ENCODE measurements at regions of chr21 and their contacts with region 1.

Region 1: DNA sequence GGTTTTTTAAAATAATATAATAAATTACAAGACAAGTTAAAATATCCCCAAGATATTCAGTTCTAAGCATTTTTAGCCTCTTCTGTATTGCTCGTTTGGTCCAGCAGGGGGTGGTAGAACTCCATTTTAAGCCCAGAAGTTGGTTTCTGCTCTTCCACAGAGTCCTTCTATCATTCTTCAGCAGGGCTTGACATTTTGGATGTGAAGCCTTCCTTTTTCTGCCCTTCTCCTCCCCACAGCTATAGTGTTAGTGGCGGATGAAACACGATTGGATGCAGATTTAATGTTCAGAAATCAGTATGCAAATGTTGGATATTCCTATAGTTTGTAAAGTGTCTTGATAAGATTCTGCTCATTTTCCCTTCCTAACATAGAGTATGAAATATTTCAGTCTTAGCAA is 1.4 kb downstream of the NCAM2 start:
- DNase-seq: no peak
- H3K4me3 Mint-ChIP-seq: no peak overlapping the region
- H3K27ac Mint-ChIP-seq: no peak overlapping the region
- H3K4me1 Mint-ChIP-seq: peaks cover 6% of the 10 kb centered on the region
- H3K27me3 Mint-ChIP-seq: peaks cover 33% of the 10 kb centered on the region

Region 2: DNA sequence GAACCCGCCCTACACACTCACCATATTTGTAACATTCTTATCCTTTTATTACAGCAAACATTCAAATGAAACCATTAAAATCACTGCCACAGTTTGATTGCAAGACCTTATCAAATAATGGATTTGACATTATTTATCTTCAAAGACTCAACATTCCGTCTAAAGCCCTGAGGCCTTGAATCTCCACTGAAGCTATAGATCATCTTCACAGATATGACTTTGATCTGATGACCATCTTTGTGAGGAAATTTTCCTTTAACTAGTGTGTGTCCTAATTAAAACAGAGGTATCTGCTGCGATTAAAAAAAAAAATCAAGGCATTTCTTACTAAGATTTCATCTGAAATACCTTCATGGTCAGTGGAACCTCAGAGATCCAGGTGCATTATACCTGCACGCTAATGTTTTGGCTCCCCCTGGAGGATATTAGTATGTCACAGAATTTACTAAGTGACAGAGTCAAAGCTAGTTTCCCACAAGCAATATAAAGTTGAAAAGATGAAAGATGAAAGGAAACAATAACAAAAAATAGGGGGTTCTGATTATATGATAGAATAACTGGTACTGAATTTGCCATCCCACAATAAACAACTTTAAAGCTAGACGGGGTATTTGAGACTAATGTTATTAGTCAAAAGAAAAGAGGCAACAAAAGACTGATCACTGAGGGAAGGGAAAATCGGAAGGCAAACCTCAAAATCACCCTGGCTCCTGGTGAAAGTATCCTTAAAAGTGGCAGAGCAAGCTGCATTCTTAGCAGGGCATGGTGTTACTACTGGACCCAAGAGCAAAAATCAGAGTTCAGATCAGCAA is 922.0 kb after region 1 on chr21:
- intact Hi-C with region 1: loop called (anchors 5 kb)
- DNase-seq: no peak
- H3K4me3 Mint-ChIP-seq: no peak overlapping the region
- H3K27ac Mint-ChIP-seq: no peak overlapping the region
- H3K4me1 Mint-ChIP-seq: no peaks in the 10 kb centered on the region
- H3K27me3 Mint-ChIP-seq: no peaks in the 10 kb centered on the region

Region 3: DNA sequence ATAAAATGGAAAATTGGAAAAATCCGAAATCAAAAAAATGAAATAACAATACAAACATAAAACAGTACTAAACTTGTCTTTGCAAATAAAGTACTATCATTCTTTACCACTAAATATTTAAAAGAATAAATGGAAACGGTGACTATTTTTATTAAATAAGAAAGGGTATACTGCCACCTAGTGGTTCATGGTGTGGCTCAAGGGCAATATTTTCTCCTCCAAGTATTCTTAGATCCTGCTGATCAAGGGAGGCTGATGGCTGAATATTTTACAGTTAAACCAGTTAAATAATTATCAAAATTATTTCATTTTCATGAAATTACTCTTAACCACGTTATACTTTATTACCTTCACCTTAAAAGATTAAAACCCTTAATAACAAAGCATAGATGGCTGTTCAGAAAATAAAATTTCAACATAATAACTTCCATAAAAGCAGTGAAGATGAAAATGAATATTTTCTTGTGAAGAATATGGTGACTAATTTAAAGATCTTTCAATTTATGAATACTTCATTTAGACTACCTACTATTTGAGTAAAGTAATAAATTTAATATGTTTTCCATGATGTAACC is 1792.4 kb after region 1 on chr21:
- intact Hi-C with region 1: loop called (anchors 2 kb)
- DNase-seq: no peak
- H3K4me3 Mint-ChIP-seq: no peak overlapping the region
- H3K27ac Mint-ChIP-seq: no peak overlapping the region
- H3K4me1 Mint-ChIP-seq: no peaks in the 10 kb centered on the region
- H3K27me3 Mint-ChIP-seq: no peaks in the 10 kb centered on the region

Measured in activated T-helper 2 cell treated with anti-CD3 and anti-CD28 coated beads, Interferon-gamma antibody, Interleukin-2, Interleukin-4, amounts not matched to agents 10 μg/mL and 5 μg/mL and 100 μg/mL, durations not matched to agents 14 hours and 24 hours and 36 hours (primary cell).